PC-9 (cell line): ENCODE measurements at regions of chr4 and their contacts with region 1.

Region 1: DNA sequence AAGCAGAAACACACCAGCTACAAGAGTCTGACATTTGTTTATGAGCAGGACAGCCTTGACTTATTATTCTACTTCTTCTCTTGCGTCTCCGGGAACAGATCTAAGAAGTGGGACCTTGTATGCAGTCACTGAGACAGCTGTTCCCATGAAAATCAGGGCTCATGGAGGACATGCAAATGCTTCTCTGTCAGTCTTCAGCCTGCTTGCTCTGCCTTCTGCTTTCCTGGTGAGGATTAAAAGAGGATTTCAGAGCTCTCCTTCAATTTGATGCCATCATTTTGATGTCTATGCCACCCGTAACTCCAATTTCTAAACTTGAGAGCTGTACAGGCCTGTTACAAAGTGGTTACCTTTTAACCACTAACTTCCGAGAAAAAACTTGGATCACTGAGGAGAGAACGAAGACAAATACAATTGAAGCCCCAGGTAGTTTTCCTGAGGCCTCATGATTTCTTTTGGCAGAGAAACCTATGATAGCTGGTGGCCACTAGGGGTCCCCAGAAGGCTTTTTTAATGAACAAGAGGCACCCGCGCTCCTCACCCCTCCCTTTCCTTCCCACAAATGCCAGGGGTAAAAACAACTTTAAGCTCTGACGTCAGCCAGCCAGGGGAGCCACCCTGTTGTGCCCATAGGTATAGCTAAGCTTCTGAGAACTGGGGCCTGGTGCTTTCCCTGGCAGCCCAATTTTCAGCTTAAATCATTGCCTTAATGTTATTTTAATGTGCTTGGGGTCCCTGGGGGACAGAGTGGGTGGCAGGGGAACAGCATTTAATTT is 97.0 kb downstream of the DDIT4L start:
- DNase-seq: peak; percentile 68 to 85
- H3K4me3 ChIP-seq: no peak overlapping the region
- H3K27ac ChIP-seq: no peak overlapping the region
- H3K4me1 ChIP-seq: peaks cover 8% of the 10 kb centered on the region
- H3K27me3 ChIP-seq: no peaks in the 10 kb centered on the region
- CTCF ChIP-seq: peak; percentile 90

Region 2: DNA sequence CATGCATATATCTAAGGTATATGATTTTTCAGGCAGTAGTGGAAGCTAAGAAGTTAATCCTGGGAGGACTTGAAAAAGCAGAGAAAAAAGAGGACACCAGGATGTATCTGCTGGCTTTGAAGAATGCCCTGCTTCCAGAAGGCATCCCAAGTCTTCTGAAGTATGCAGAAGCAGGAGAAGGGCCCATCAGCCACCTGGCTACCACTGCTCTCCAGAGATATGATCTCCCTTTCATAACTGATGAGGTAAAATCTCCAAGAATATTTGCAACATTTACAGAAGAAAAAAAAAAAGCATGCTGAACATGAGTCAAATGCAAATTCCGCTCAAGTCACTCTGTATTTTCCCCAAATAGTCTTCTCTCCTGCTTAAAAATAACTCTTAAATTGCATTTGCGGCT is 486.6 kb before region 1 on chr4:
- CTCF ChIA-PET with region 1: no interaction called
- POLR2A ChIA-PET with region 1: no interaction called
- intact Hi-C with region 1: no loop called
- DNase-seq: no peak
- H3K4me3 ChIP-seq: no peak overlapping the region
- H3K27ac ChIP-seq: no peak overlapping the region
- H3K4me1 ChIP-seq: no peaks in the 10 kb centered on the region
- H3K27me3 ChIP-seq: no peaks in the 10 kb centered on the region
- CTCF ChIP-seq: no peak

Region 3: GRCh38 chr4:99998062-99998867 is 95.0 kb before region 1 on chr4:
- CTCF ChIA-PET with region 1: interaction called, 12 read pairs
- POLR2A ChIA-PET with region 1: no interaction called
- intact Hi-C with region 1: no loop called
- DNase-seq: no peak
- H3K4me3 ChIP-seq: no peak overlapping the region
- H3K27ac ChIP-seq: peak overlapping the region; percentile 10; the same call in 1 of the 2 replicates
- H3K4me1 ChIP-seq: peaks cover 8% of the 10 kb centered on the region
- H3K27me3 ChIP-seq: no peaks in the 10 kb centered on the region
- CTCF ChIP-seq: peak; percentile 71